Activated CD4-positive, alpha-beta T cell treated with anti-CD3 and anti-CD28 coated beads, Interleukin-2, amount 10 ng/mL, durations not matched to agents 7 days and 5 days (primary cell): ENCODE measurements at regions of chr1 and their contacts with region 1.

Region 1: DNA sequence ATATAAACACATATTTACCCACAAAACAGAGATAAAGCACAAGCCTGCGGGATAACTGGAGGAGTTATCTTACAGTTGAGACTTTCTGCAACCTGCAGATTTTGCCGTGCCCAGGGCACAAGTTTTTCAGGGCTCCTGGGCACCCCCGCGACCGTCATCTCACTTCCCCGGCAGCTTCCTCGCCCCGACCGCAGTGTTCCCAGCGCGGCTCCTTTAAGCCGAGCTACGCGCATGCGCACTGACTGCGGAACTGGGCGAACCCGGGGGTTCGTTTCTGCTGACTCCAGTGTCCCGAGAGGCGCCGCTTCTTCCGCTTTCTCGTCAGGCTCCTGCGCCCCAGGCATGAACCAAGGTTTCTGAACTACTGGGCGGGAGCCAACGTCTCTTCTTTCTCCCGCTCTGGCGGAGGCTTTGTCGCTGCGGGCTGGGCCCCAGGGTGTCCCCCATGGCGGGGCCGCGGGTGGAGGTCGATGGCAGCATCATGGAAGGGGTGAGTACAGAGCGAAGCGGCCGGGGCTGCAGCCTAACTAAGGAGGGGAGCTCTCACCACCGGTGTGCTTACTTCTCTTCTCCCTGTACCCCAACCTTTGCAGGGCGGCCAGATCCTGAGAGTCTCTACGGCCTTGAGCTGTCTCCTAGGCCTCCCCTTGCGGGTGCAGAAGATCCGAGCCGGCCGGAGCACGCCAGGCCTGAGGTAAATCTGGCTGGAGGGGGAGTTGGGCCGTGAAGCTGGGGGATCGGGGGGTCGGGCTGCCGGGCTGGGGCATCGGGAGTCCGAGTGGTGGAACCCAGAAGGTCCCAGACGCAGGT is at the start of gene RTCA:
- DNase-seq: peak; percentile 97
- H3K4me3 Mint-ChIP-seq: peak within 1 kb of the TSS; percentile 96
- H3K27ac Mint-ChIP-seq: peak within 1 kb of the TSS; percentile 98
- H3K4me1 Mint-ChIP-seq: peaks cover 42% of the 10 kb centered on the region
- H3K27me3 Mint-ChIP-seq: no peaks in the 10 kb centered on the region
- total RNA-seq, gene RTCA: 48.2 to 50.6 TPM

Region 2: DNA sequence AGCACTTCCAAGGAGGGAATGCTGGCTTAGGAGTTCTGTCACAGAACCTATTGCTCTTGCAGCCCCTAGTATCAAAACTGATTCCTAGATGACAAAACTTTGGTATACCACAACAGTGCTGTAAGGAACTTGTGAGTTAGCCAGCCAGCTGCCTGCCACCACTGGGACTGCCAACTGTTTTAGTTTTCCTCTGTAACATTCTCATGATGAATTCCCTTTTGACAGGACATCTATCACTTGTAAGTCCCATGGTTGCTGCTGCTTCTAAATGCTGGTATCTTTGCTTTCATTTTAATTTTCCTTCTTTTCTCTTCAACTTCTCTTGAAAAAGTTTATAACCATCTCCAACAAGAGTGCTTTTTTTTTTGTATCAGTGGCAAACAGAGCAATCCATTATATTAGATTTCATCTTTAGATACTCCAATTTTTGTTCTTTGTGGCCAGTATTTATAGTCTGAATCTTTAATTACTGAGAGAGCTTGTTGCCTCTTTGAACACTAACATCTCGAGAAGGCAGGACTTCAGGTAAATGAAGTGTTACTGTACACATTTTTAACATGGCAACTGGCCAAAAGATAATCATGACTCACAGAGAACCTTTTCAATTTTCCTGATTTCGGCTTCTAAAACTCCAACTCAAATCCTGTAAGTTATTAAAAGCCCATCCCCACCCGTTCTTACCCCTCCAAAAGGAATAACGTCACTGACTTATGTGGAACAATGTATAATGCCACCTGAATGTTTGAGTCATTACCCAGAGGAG is 36.3 kb before region 1 on chr1:
- CTCF ChIA-PET with region 1: no interaction called
- POLR2A ChIA-PET with region 1: no interaction called
- DNase-seq: no peak
- H3K4me3 Mint-ChIP-seq: no peak overlapping the region
- H3K27ac Mint-ChIP-seq: no peak overlapping the region
- H3K4me1 Mint-ChIP-seq: peaks cover 2% of the 10 kb centered on the region
- H3K27me3 Mint-ChIP-seq: no peaks in the 10 kb centered on the region

Region 3: DNA sequence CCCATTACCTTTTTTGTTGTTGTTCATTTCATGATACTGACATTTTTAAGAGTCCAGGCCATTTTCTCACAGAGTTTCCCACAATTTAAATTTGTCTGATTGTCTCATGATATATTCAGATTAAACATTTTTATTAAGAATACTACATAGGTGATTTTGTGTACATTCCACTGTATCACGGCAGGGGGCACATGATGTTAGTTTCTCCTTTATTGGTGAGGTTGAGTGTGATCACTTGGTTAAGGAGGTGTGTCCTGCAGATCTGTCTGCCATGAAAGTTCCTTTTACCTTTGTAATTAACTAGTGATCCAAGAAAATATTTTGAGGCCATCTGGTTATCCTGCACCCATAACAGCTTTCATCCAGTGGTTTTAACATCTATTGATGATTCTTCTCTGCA is 11.7 kb after region 1 on chr1:
- CTCF ChIA-PET with region 1: interaction called, 3 read pairs
- POLR2A ChIA-PET with region 1: interaction called, 14 read pairs
- DNase-seq: peak; percentile 33
- H3K4me3 Mint-ChIP-seq: no peak overlapping the region
- H3K27ac Mint-ChIP-seq: no peak overlapping the region
- H3K4me1 Mint-ChIP-seq: peaks cover 30% of the 10 kb centered on the region
- H3K27me3 Mint-ChIP-seq: no peaks in the 10 kb centered on the region

Region 4: GRCh38 chr1:100360790-100361510 is 94.8 kb after region 1 on chr1:
- CTCF ChIA-PET with region 1: no interaction called
- POLR2A ChIA-PET with region 1: no interaction called
- DNase-seq: no peak
- H3K4me3 Mint-ChIP-seq: no peak overlapping the region
- H3K27ac Mint-ChIP-seq: no peak overlapping the region
- H3K4me1 Mint-ChIP-seq: peaks cover 71% of the 10 kb centered on the region
- H3K27me3 Mint-ChIP-seq: no peaks in the 10 kb centered on the region

Region 5: DNA sequence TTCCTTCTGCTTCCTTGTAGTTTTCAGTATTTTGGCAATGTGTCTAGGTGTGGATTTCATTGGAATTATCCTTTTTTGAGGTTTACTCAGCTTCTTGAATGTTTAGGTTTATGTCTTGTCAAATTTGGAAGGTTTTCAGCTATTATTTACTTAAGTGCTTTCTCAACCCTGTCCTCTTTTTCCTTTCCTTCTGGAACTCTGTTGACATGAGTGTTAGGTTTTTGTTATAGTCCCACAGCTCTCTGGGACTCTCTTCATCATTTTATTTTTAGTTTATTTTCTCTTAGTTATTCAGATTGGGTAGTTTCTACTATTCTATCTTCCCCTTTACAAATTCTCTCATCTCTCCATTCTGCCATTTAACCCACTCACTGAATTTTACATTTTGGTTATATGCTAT is 208.7 kb after region 1 on chr1:
- CTCF ChIA-PET with region 1: no interaction called
- POLR2A ChIA-PET with region 1: no interaction called
- DNase-seq: no peak
- H3K4me3 Mint-ChIP-seq: no peak overlapping the region
- H3K27ac Mint-ChIP-seq: no peak overlapping the region
- H3K4me1 Mint-ChIP-seq: peaks cover 1% of the 10 kb centered on the region
- H3K27me3 Mint-ChIP-seq: no peaks in the 10 kb centered on the region